Natural killer cell (primary cell): ENCODE measurements at regions of chr12 and their contacts with region 1.

Region 1: GRCh38 chr12:1093166-1093751 is 102.2 kb downstream of the ERC1 start:
- DNase-seq: peak in 1 of 2 donors; percentile 72
- ATAC-seq: peak in 2 of 3 donors; percentile 67 to 73
- H3K4me3 ChIP-seq: no peak overlapping the region
- H3K4me3 Mint-ChIP-seq: no peak overlapping the region
- H3K27ac ChIP-seq: no peak overlapping the region
- H3K27ac Mint-ChIP-seq: no peak overlapping the region
- H3K4me1 ChIP-seq: no peaks in the 10 kb centered on the region
- H3K4me1 Mint-ChIP-seq: peaks cover 2 to 4% of the 10 kb centered on the region in 2 donors
- H3K27me3 ChIP-seq: no peaks in the 10 kb centered on the region
- H3K27me3 Mint-ChIP-seq: no peaks in the 10 kb centered on the region
- CTCF ChIP-seq: peak; percentile 70

Region 2: DNA sequence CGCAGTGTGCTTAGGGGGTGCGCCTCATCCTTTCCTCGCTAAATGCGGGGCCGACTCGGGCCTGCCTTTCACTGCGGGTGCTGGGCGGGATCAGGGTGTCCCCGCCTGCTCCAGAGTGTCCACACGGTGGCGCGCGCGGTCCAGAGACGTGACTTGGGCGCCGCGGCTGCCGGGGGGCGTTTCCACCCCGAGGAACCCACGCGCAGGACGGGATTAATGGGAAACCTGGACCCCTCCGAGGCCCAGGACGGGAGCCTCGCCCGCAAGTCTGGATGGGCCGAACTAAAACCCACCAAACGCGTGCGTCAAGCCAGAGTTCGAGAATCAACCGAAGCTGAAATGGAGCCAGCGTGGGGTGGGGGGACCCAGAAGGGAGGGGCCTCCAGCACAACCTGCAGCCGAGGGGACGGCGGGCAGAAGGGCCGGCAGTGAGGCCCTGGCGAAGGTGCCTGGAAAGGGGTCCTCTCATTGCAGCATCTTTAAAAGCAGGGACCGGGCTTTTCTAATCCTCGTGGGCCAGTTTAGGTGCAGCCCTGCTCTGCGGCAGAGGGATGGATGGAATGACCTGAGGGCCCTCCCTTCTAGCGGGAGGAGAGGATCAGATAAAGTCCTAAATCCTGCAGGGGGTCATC is 523.3 kb before region 1 on chr12:
- intact Hi-C with region 1: loop called (anchors 5 kb)
- DNase-seq: peak; percentile 85 to 91
- ATAC-seq: peak; percentile 95 to 97 (median 95)
- H3K4me3 ChIP-seq: peak overlapping the region; percentile 58
- H3K4me3 Mint-ChIP-seq: peak overlapping the region; percentile 93
- H3K27ac ChIP-seq: no peak overlapping the region
- H3K27ac Mint-ChIP-seq: peak overlapping the region; percentile 56 to 80
- H3K4me1 ChIP-seq: peaks cover 32% of the 10 kb centered on the region
- H3K4me1 Mint-ChIP-seq: peaks cover 32 to 51% of the 10 kb centered on the region in 2 donors
- H3K27me3 ChIP-seq: no peaks in the 10 kb centered on the region
- H3K27me3 Mint-ChIP-seq: no peaks in the 10 kb centered on the region
- CTCF ChIP-seq: peak; percentile 82